ENCODE measurements at regions of chr16 and their contacts with region 1.

Region 1: GRCh38 chr16:55944377-55944802 is 69.2 kb upstream of the CES5A start:
- DNase-seq: peak; percentile 57 to 87 (median 78)
- H3K4me3 ChIP-seq: no peak overlapping the region
- H3K27ac ChIP-seq: peak overlapping the region in 56 of 59 donors; percentile 24 to 94 (median 81)
- H3K27me3 ChIP-seq: no peaks in the 10 kb centered on the region
- CTCF ChIP-seq: peak; percentile 91 to 99 (median 98)

Region 2: GRCh38 chr16:56102183-56102686 is 157.8 kb after region 1 on chr16:
- intact Hi-C with region 1: loop called in 1 of 2 experiments (anchors 5 kb)
- DNase-seq: peak in 5 of 10 donors; percentile 16 to 53 (median 33)
- H3K4me3 ChIP-seq: peak overlapping the region in 58 of 59 donors; percentile 24 to 67 (median 43)
- H3K27ac ChIP-seq: peak overlapping the region in 54 of 59 donors; percentile 5 to 87 (median 72)
- H3K27me3 ChIP-seq: no peaks in the 10 kb centered on the region
- CTCF ChIP-seq: no peak

Region 3: DNA sequence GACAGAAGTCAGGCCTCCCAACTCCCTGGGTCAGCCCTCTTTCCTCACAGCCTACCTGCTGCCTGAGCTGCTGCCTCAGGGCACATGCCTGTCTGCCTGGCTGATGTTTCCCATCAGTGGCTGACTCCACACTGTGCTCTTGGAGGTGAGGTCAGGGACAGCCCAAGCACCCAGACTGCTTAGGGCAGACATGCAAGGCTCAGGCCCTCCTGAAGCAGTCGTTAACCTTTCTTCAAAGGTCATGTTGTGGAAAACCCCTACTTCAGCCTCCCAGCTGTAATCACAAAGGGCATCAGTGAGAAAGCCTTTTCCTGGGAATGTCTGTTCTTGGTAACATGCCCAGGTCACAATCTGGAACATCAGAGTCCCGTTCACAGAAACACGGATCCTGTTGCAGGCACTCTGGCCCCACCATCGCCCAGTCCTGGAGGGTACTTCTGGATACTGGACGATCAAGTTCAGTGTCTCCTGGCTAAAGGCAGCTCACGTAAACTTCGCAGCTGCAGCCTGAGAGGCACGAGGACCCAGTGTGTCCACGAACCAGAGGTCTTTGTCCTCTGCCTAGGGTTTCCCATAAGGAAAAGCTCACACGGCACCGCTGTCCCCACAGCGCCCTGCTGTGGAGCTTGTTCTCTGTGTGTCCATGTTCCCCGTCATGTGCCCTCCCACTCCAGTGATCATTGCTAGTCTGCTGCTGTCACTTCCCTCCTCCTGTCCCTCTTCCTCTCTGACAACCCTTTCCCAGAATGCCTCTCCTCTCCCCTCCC is 301.8 kb after region 1 on chr16:
- intact Hi-C with region 1: loop called in 1 of 2 experiments (anchors 10 kb)
- DNase-seq: peak in 9 of 10 donors; percentile 71 to 92 (median 85)
- H3K4me3 ChIP-seq: peak overlapping the region in 1 of 59 donors; percentile 12
- H3K27ac ChIP-seq: peak overlapping the region; percentile 66 to 100 (median 93)
- H3K27me3 ChIP-seq: no peaks in the 10 kb centered on the region
- CTCF ChIP-seq: peak in 50 of 56 donors; percentile 20 to 73 (median 51)

Region 4: GRCh38 chr16:56356276-56357240 is 412.2 kb after region 1 on chr16:
- intact Hi-C with region 1: loop called (anchors 5 to 10 kb)
- DNase-seq: peak; percentile 69 to 85 (median 75)
- H3K4me3 ChIP-seq: peak overlapping the region in 55 of 59 donors; percentile 2 to 59 (median 37)
- H3K27ac ChIP-seq: peak overlapping the region in 58 of 59 donors; percentile 36 to 93 (median 76)
- H3K27me3 ChIP-seq: no peaks in the 10 kb centered on the region
- CTCF ChIP-seq: peak; percentile 59 to 92 (median 82)